CD8-positive, alpha-beta memory T cell (primary cell): ENCODE measurements at regions of chr6 and their contacts with region 1.

Region 1: DNA sequence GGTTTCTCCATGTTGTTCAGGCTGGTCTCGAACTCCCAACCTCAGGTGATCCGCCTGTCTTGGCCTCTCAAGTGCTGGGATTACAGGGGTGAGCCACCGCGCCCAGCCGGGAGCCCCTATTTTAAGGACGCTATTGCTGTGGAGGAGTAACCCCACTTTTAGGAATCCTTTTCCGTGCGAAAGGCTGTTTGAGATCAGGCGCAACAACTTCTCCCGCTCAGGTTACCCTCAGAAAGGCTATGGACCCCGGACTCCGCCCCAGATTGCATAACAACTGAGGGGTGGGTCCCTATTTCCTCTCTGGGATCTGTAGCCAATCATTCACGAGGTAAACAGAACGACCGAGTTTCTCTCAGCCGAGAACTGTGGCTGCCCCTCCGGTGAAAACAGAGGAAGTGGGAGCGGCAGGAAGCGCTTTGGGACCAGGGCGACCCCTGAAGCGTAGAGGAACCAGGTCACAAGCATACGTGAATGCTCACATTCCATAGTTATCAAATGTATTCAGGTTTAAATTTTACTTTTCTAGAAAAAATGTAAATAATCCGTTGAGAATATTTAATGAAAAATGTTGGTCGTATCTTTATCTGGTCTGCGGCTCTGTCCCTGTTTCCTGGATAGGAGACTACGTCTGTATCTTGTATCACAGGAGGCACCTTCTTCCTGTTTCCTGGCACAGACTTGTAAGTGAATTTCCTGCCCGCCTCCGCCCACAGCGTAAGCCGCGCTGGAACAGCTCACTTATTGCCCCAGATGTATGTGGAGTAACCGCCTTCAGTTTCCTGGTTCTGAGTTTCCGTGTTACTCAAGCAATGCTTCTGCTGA is 26.8 kb downstream of the HLA-E start:
- DNase-seq: peak; percentile 79 to 95 (median 95)
- H3K4me3 ChIP-seq: peak overlapping the region; percentile 58
- H3K4me3 Mint-ChIP-seq: peak overlapping the region; percentile 75 to 93 (median 90)
- H3K27ac ChIP-seq: peak overlapping the region; percentile 83
- H3K27ac Mint-ChIP-seq: peak overlapping the region; percentile 85 to 99 (median 98)
- H3K4me1 ChIP-seq: peaks cover 50% of the 10 kb centered on the region
- H3K4me1 Mint-ChIP-seq: peaks cover 52 to 65% (median 63%) of the 10 kb centered on the region in 3 donors
- H3K27me3 ChIP-seq: no peaks in the 10 kb centered on the region
- H3K27me3 Mint-ChIP-seq: no peaks in the 10 kb centered on the region

Region 2: DNA sequence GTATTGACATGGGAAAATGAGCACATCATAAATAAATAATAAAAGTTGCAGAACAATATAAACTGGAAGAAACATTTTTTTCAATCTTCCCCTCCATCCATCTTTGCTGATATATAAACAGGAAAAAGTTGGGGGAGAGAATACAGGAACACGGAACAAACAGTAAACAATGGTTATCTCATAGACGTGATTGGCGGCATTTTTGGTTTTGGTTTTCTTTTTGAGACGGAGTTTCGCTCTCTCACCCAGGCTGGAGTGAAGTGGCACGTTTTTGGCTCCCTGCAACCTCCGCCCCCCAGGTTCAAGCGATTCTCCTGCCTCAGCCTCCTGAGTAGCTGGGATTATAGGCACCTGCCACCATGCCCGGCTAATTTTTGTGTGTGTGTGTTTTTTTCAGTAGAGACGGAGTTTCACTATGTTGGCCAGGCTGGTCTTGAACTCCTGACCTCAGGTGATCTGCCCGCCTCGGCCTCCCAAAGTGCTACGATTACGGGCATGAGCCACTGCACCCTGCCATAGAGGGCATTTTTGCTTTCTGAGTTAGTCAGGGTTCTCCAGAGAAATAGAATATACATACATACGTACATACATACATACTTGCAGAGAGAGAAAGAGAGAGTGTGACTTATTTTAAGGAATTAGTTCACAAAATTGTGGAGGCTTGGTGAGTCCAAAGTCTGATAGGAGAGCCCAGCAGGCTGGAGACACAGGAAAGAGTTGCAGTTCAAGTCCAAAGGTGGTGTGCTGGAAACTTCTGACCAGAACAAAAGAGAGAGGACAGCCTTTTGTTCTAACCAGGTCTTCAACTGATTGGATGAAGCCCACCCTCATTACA is 17.5 kb after region 1 on chr6:
- CTCF ChIA-PET with region 1: interaction called, 113 read pairs
- POLR2A ChIA-PET with region 1: interaction called, 13 read pairs
- DNase-seq: peak in 1 of 5 donors; percentile 32
- H3K4me3 ChIP-seq: peak overlapping the region; percentile 6
- H3K4me3 Mint-ChIP-seq: peak overlapping the region; percentile 70 to 95 (median 93)
- H3K27ac ChIP-seq: no peak overlapping the region
- H3K27ac Mint-ChIP-seq: peak overlapping the region; percentile 74 to 98 (median 94)
- H3K4me1 ChIP-seq: peaks cover 39% of the 10 kb centered on the region
- H3K4me1 Mint-ChIP-seq: peaks cover 32 to 43% (median 42%) of the 10 kb centered on the region in 3 donors
- H3K27me3 ChIP-seq: no peaks in the 10 kb centered on the region
- H3K27me3 Mint-ChIP-seq: no peaks in the 10 kb centered on the region

Region 3: GRCh38 chr6:30656513-30656912 is 140.4 kb after region 1 on chr6:
- CTCF ChIA-PET with region 1: no interaction called
- POLR2A ChIA-PET with region 1: no interaction called
- DNase-seq: no peak
- H3K4me3 ChIP-seq: no peak overlapping the region
- H3K4me3 Mint-ChIP-seq: no peak overlapping the region
- H3K27ac ChIP-seq: no peak overlapping the region
- H3K27ac Mint-ChIP-seq: peak overlapping the region in 2 of 8 donors; percentile 29 to 90
- H3K4me1 ChIP-seq: no peaks in the 10 kb centered on the region
- H3K4me1 Mint-ChIP-seq: peaks cover 0 to 5% (median 2%) of the 10 kb centered on the region in 3 donors
- H3K27me3 ChIP-seq: no peaks in the 10 kb centered on the region
- H3K27me3 Mint-ChIP-seq: no peaks in the 10 kb centered on the region

Region 4: DNA sequence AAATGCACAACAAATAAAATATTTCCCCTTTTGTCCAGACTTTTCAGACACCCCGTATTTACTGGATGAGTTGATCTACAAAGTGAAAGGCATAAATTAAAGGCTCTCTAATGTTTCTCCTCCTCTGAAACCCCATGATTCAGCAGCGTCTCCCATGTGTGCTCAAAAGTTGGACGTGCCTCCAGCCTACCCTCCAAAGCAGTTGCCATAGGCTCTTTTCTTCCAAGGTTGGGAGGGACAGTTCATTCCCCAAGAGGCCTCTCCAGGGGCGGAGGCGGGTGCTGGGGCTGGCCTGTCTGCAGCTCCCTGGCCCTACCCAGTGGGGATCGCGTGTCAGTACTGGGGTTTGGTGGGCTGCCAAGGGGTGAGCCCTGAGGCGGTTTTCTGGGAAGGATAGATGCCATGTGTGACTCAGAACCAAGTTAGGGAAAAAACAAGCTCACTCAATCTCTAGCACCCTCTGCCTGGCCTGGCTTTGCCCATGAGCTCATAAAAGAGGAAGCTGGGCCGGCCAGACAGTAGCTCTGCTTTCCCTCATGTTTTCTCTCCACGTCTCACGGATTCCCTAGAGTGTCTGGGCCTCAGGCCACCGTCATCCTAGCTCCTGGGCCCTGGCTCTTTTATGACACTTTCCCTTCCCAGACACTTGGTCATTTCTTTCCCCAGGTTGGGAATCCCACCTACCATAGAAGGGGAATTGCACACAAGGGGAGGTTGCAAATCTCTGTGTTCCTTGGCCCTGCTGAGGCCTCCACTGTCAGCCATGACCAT is 236.2 kb after region 1 on chr6:
- CTCF ChIA-PET with region 1: no interaction called
- POLR2A ChIA-PET with region 1: no interaction called
- DNase-seq: no peak
- H3K4me3 ChIP-seq: no peak overlapping the region
- H3K4me3 Mint-ChIP-seq: no peak overlapping the region
- H3K27ac ChIP-seq: no peak overlapping the region
- H3K27ac Mint-ChIP-seq: peak overlapping the region in 1 of 8 donors; percentile 48
- H3K4me1 ChIP-seq: no peaks in the 10 kb centered on the region
- H3K4me1 Mint-ChIP-seq: peaks cover 1 to 3% (median 2%) of the 10 kb centered on the region in 3 donors
- H3K27me3 ChIP-seq: no peaks in the 10 kb centered on the region
- H3K27me3 Mint-ChIP-seq: peaks cover 0 to 3% of the 10 kb centered on the region in 2 donors